ENCODE measurements at regions of chr1 and their contacts with region 1.

Region 1: DNA sequence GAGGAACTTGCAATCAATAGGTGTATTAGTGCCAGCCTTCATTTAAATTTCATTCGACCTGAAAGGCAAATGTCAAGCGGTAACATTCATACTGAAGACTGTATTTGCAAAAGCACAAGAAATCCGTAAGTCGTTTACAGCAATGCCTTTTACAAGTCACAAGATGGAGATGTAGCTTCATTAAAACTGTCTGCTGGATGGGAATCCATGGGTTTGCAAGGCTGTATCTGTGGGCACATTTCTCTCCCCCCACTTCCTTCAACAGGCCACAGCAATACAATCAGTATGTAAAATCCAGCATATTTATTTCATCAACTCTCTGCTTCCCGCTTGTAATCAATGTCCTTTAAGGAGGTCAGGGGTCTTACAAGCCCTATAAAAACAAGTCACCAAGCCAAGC is 147.1 kb downstream of the SLC45A1 start:
- DNase-seq: no peak
- ATAC-seq: no peak
- H3K4me3 ChIP-seq: no peak overlapping the region
- H3K27ac ChIP-seq: no peak overlapping the region
- H3K4me1 ChIP-seq: peaks cover 11% of the 10 kb centered on the region
- H3K27me3 ChIP-seq: no peaks in the 10 kb centered on the region
- CTCF ChIP-seq: no peak

Region 2: GRCh38 chr1:8423650-8424538 is 41.1 kb before region 1 on chr1:
- CTCF ChIA-PET with region 1: no interaction called
- POLR2A ChIA-PET with region 1: no interaction called
- intact Hi-C with region 1: loop called (anchors 5 kb)
- DNase-seq: peak; percentile 61
- ATAC-seq: peak; percentile 53
- H3K4me3 ChIP-seq: peak overlapping the region; percentile 75
- H3K27ac ChIP-seq: peak overlapping the region; percentile 93
- H3K4me1 ChIP-seq: peaks cover 37% of the 10 kb centered on the region
- H3K27me3 ChIP-seq: no peaks in the 10 kb centered on the region
- CTCF ChIP-seq: no peak

Region 3: GRCh38 chr1:9145021-9145668 is 680.1 kb after region 1 on chr1:
- CTCF ChIA-PET with region 1: no interaction called
- POLR2A ChIA-PET with region 1: interaction called, 25 read pairs
- intact Hi-C with region 1: no loop called
- DNase-seq: peak; percentile 49
- ATAC-seq: peak; percentile 53; the same call in 1 of the 2 replicates
- H3K4me3 ChIP-seq: no peak overlapping the region
- H3K27ac ChIP-seq: no peak overlapping the region
- H3K4me1 ChIP-seq: 0 out of 2 replicates have a peak, but pooled peaks cover 5% of the 10 kb centered on the region
- H3K27me3 ChIP-seq: no peaks in the 10 kb centered on the region
- CTCF ChIP-seq: no peak